ENCODE measurements at regions of chr19 and their contacts with region 1.

Region 1: DNA sequence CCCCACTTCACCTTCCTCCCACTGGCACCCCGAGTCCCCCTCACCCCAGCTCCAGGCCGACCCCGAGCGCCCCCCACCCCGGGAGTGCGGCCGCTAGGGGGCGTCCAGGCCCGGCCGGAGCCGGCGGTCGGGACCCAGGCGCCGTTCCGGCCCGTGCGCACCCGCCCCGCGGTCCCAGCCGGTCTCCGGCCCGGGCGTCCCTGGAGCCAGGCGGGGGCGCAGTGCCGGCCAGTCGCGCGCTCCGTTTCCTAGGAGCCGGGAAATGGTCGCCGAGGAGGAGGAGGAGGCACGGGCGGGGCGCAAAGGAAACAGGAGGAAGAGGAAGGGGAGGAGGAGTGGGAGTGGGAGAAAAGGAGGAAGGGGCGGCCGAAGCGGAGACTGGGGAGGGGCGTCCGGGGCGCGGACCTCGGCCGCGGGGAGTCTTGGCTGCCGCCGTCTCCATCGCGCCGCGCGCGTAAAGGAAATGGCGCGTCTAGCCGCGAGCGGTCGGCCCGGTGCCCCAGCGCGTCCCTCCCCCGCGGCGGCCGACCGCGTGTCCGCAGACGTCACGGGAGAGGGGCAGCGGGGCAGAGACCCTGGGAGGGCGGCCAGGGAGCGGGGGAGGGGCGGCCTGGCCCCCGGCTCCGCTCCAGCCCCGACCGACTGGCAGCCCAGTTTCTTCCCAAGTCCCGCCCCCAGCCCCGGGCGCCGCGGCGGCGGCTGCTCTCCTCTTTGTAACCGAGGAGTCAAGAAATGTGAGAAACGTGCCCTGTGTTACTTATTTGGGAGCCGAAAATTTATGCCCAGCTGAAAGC is 1.1 kb upstream of the KCTD15 start:
- DNase-seq: peak; percentile 86 to 93
- ATAC-seq: peak; percentile 91
- H3K4me3 ChIP-seq: peak overlapping the region; percentile 59 to 80
- H3K27ac ChIP-seq: peak overlapping the region; percentile 63 to 80
- H3K4me1 ChIP-seq: no peaks in the 10 kb centered on the region
- H3K27me3 ChIP-seq: no peaks in the 10 kb centered on the region

Region 2: GRCh38 chr19:33767898-33768413 is 27.6 kb before region 1 on chr19:
- intact Hi-C with region 1: no loop called
- DNase-seq: no peak
- ATAC-seq: no peak
- H3K4me3 ChIP-seq: no peak overlapping the region
- H3K27ac ChIP-seq: no peak overlapping the region
- H3K4me1 ChIP-seq: no peaks in the 10 kb centered on the region
- H3K27me3 ChIP-seq: no peaks in the 10 kb centered on the region

Region 3: DNA sequence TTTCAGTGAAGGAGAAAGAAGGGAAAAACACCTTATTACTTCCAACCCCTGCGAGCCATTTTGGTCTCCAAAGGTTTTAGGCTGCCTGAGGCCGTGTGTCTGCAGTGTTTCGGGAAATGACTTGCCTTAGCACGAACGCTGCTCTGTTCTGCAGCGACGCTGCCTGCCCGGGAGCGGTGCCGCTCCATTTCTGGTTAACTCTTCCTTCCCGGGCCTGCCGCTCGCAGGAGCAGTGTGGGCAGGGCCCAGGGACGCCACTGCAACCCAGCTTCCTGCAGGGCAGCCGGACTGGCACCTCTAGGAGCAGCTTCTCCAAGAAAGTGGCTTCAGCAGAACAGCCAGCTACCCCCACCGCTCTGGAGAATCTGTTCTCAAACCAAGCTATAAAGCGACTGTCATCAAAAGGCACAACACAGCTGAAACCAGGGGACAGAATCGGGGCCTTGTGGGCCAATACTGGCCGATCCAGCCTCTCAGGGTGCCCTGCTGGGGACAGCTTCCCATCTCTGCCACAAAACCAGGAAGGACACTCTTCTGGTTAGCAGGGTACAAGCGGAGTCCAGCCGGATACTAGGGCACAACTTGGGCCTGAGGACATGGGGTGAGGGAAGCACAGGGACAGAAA is 73.3 kb after region 1 on chr19:
- intact Hi-C with region 1: loop called in 1 of 2 experiments (anchors 5 kb)
- DNase-seq: peak; percentile 63 to 83
- ATAC-seq: peak; percentile 85
- H3K4me3 ChIP-seq: peak overlapping the region in 1 of 2 donors; percentile 14
- H3K27ac ChIP-seq: no peak overlapping the region
- H3K4me1 ChIP-seq: no peaks in the 10 kb centered on the region
- H3K27me3 ChIP-seq: no peaks in the 10 kb centered on the region

Region 4: DNA sequence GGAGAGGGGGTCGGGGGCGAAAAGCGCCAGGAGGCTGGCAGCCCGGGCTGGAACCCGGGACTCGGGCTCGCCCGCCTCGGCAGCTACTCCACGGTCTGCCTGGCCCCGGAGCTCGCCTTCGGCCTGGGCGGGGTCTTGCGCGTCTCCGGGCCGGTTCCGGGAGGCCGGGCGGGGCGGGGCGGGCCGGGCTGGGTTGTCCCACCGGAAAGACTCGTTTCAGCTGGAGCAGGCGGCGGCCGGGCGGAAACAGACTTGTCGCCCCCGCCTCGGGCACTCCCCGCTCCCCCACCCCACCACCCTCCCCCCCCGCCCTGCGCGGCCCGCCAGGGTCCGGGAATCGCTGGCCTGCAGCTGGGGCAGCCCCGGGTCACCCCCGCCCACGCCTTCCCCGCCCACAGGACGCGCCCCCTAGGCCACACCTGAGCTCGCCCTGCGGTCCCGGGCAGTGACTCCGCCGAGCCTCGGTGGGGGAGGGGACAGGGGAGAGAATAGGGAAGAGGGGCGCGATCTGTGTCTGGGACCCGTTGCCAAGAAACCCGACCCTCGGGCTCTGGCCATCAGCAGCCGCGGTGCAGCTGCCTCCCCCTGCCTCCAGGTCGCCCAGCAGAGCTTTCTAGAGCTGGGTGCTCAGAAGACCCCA is 110.5 kb after region 1 on chr19:
- intact Hi-C with region 1: loop called in 1 of 2 experiments (anchors 5 kb)
- DNase-seq: peak; percentile 68 to 89
- ATAC-seq: peak; percentile 80
- H3K4me3 ChIP-seq: peak overlapping the region in 1 of 2 donors; percentile 29
- H3K27ac ChIP-seq: no peak overlapping the region
- H3K4me1 ChIP-seq: no peaks in the 10 kb centered on the region
- H3K27me3 ChIP-seq: peaks cover 0 to 2% of the 10 kb centered on the region in 2 donors

Measured in aorta (tissue), 5 donors.